H1 (cell line): ENCODE measurements at regions of chr5 and their contacts with region 1.

Region 1: DNA sequence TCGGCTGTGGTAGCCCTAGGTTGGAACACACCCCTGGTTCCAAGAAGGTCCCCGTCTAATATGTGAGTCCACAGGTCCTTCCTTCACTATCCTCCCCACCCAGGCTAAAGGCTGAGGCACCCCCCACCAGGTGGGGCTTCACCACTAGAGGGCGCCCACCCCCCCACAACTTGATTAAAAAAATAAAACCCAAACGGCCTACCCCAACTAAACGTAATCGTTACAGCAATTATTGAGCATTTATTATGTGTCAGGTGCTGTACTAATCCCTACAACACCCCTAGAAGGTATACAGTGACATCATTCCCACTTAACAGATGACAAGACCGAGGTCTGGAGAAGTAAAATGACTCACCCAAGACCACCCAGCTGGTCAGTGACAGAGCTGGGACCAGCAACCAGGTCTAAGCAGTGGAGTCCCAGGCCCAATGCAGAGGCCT is 65.0 kb downstream of the FGF18 start:
- DNase-seq: peak in 1 of 2 experiments; percentile 77
- H3K4me3 ChIP-seq: no peak overlapping the region
- H3K27ac ChIP-seq: no peak overlapping the region
- H3K4me1 ChIP-seq: peaks cover 0 to 6% (median under 1%) of the 10 kb centered on the region in 4 experiments; a peak in 2 of 7 replicates
- H3K27me3 ChIP-seq: no peaks in the 10 kb centered on the region; a peak in 1 of 7 replicates
- CTCF ChIP-seq: peak; percentile 69 to 72 (median 70)
- EP300 ChIP-seq: no peak
- POLR2A ChIP-seq: no peak
- RAD21 ChIP-seq: peak; percentile 56 to 75

Region 2: DNA sequence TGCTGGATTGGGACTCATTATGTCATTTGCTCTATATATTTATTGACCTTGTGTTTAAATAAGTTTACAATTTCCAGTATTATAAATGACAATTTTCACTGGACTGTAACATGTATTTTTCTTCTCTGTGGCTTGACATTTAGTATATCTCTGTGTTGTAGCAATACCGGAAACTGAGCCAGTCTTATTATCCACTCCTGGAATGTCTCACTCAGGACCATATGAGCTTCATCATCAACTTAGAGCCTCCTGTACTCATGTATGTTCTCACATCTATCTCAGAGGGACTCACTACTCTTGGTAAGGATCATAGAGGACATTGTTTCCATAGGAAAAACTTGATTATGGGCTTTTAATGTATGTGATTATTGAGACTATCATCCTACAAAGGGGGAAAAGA is 242.0 kb before region 1 on chr5:
- CTCF ChIA-PET with region 1: no interaction called
- POLR2A ChIA-PET with region 1: no interaction called
- DNase-seq: no peak
- H3K4me3 ChIP-seq: no peak overlapping the region
- H3K27ac ChIP-seq: no peak overlapping the region
- H3K4me1 ChIP-seq: no peaks in the 10 kb centered on the region
- H3K27me3 ChIP-seq: no peaks in the 10 kb centered on the region
- CTCF ChIP-seq: no peak
- EP300 ChIP-seq: no peak
- POLR2A ChIP-seq: no peak
- RAD21 ChIP-seq: no peak

Region 3: GRCh38 chr5:171418316-171418981 is 66.0 kb before region 1 on chr5:
- CTCF ChIA-PET with region 1: interaction called, 64 read pairs
- POLR2A ChIA-PET with region 1: interaction called, 4 read pairs
- DNase-seq: peak; percentile 69 to 94
- H3K4me3 ChIP-seq: peak overlapping the region; percentile 35 to 73 (median 70)
- H3K27ac ChIP-seq: no peak overlapping the region
- H3K4me1 ChIP-seq: peaks cover 0 to 22% (median 13%) of the 10 kb centered on the region in 4 experiments; a peak in 6 of 7 replicates
- H3K27me3 ChIP-seq: peaks cover 22 to 37% (median 28%) of the 10 kb centered on the region in 4 experiments
- CTCF ChIP-seq: peak in 2 of 3 experiments; percentile 95 to 97; a peak in 3 of 4 replicates
- EP300 ChIP-seq: no peak
- POLR2A ChIP-seq: no peak
- RAD21 ChIP-seq: peak; percentile 94 to 98

Region 4: GRCh38 chr5:171450423-171451331 is 33.8 kb before region 1 on chr5:
- CTCF ChIA-PET with region 1: interaction called, 22 read pairs
- POLR2A ChIA-PET with region 1: no interaction called
- DNase-seq: peak in 1 of 2 experiments; percentile 69
- H3K4me3 ChIP-seq: peak overlapping the region; percentile 5 to 58 (median 28); a peak in 6 of 8 replicates
- H3K27ac ChIP-seq: no peak overlapping the region
- H3K4me1 ChIP-seq: peaks cover 14 to 25% (median 20%) of the 10 kb centered on the region in 4 experiments
- H3K27me3 ChIP-seq: peaks cover 0 to 8% (median 6%) of the 10 kb centered on the region in 4 experiments; a peak in 4 of 7 replicates
- CTCF ChIP-seq: no peak
- EP300 ChIP-seq: no peak
- POLR2A ChIP-seq: 0 out of 3 replicates have a peak, but pooled peaks of 1 of the 2 experiments have one; percentile 18
- RAD21 ChIP-seq: no peak

Region 5: GRCh38 chr5:171474230-171474813 is 10.2 kb before region 1 on chr5:
- CTCF ChIA-PET with region 1: interaction called, 52 read pairs
- POLR2A ChIA-PET with region 1: no interaction called
- DNase-seq: no peak
- H3K4me3 ChIP-seq: no peak overlapping the region
- H3K27ac ChIP-seq: no peak overlapping the region
- H3K4me1 ChIP-seq: no peaks in the 10 kb centered on the region
- H3K27me3 ChIP-seq: no peaks in the 10 kb centered on the region
- CTCF ChIP-seq: no peak
- EP300 ChIP-seq: no peak
- POLR2A ChIP-seq: no peak
- RAD21 ChIP-seq: no peak

Region 6: GRCh38 chr5:171505473-171506043 is 21.1 kb after region 1 on chr5:
- CTCF ChIA-PET with region 1: interaction called, 12 read pairs
- POLR2A ChIA-PET with region 1: no interaction called
- DNase-seq: no peak
- H3K4me3 ChIP-seq: no peak overlapping the region
- H3K27ac ChIP-seq: no peak overlapping the region
- H3K4me1 ChIP-seq: no peaks in the 10 kb centered on the region; a peak in 1 of 7 replicates
- H3K27me3 ChIP-seq: no peaks in the 10 kb centered on the region; a peak in 1 of 7 replicates
- CTCF ChIP-seq: no peak
- EP300 ChIP-seq: no peak
- POLR2A ChIP-seq: no peak
- RAD21 ChIP-seq: no peak

Region 7: GRCh38 chr5:171543148-171543815 is 58.8 kb after region 1 on chr5:
- CTCF ChIA-PET with region 1: interaction called, 16 read pairs
- POLR2A ChIA-PET with region 1: no interaction called
- DNase-seq: no peak
- H3K4me3 ChIP-seq: no peak overlapping the region
- H3K27ac ChIP-seq: no peak overlapping the region
- H3K4me1 ChIP-seq: no peaks in the 10 kb centered on the region
- H3K27me3 ChIP-seq: no peaks in the 10 kb centered on the region; a peak in 1 of 7 replicates
- CTCF ChIP-seq: no peak
- EP300 ChIP-seq: no peak
- POLR2A ChIP-seq: no peak
- RAD21 ChIP-seq: no peak

Region 8: DNA sequence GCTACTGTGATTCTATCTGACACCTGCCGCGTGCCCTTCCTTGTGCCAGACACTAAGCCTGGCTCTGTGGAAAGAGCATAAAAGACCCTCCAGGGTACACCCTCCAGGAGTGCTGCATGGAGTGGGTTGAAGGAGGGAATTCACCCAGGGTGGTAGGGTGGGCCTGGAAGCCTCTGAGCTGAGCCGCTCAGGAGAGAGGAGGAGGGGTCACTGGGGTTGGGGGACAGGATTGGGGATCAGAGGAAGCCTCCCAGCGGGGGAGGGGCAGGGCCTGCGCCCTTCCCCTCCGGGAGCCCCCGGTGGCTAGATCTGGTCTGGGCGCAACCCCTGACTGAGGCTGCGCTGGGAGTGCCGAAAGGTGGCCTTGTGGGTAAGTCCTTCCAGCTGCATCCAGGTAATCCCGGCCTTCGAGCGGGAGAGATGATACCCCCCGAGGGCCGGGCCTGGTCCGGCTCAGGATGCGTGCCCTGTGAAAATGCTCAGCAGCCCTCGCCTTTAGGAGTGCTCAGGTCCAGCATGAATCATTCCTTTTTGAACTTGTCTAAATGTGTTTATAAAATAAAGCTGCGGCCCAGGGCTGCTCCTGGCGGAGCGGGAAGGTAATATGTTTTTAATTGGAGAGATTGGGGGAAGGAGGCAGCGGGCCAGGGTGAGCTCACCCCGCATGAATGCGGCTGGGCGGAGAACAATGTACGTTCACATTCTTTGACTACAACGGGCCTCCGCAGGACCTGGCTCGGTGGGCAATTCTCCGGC is 183.0 kb after region 1 on chr5:
- CTCF ChIA-PET with region 1: interaction called, 10 read pairs
- POLR2A ChIA-PET with region 1: no interaction called
- DNase-seq: peak; percentile 56 to 82
- H3K4me3 ChIP-seq: peak overlapping the region in 1 of 4 experiments; percentile 46; a peak in 2 of 8 replicates
- H3K27ac ChIP-seq: no peak overlapping the region
- H3K4me1 ChIP-seq: peaks cover 0 to 12% (median 6%) of the 10 kb centered on the region in 4 experiments; a peak in 6 of 7 replicates
- H3K27me3 ChIP-seq: peaks cover 0 to 2% (median 0%) of the 10 kb centered on the region in 4 experiments; a peak in 3 of 7 replicates
- CTCF ChIP-seq: no peak
- EP300 ChIP-seq: no peak
- POLR2A ChIP-seq: no peak
- RAD21 ChIP-seq: no peak